ENCODE measurements at regions of chr1 and their contacts with region 1.

Region 1: GRCh38 chr1:11650331-11650991 is 3.8 kb downstream of the FBXO2 start:
- DNase-seq: peak; percentile 86 to 90
- ATAC-seq: peak; percentile 83 to 91 (median 88)
- H3K4me3 ChIP-seq: peak overlapping the region; percentile 16
- H3K4me3 Mint-ChIP-seq: peak overlapping the region; percentile 79
- H3K27ac ChIP-seq: peak overlapping the region; percentile 48
- H3K27ac Mint-ChIP-seq: peak overlapping the region; percentile 73 to 80
- H3K4me1 ChIP-seq: peaks cover 44% of the 10 kb centered on the region
- H3K4me1 Mint-ChIP-seq: peaks cover 9 to 35% of the 10 kb centered on the region in 2 donors
- H3K27me3 ChIP-seq: no peaks in the 10 kb centered on the region
- H3K27me3 Mint-ChIP-seq: no peaks in the 10 kb centered on the region
- CTCF ChIP-seq: peak; percentile 80

Region 2: GRCh38 chr1:11670747-11671146 is 20.3 kb after region 1 on chr1:
- intact Hi-C with region 1: loop called (anchors 2 kb)
- DNase-seq: no peak
- ATAC-seq: no peak
- H3K4me3 ChIP-seq: no peak overlapping the region
- H3K4me3 Mint-ChIP-seq: no peak overlapping the region
- H3K27ac ChIP-seq: no peak overlapping the region
- H3K27ac Mint-ChIP-seq: no peak overlapping the region
- H3K4me1 ChIP-seq: peaks cover 10% of the 10 kb centered on the region
- H3K4me1 Mint-ChIP-seq: peaks cover 6 to 21% of the 10 kb centered on the region in 2 donors
- H3K27me3 ChIP-seq: no peaks in the 10 kb centered on the region
- H3K27me3 Mint-ChIP-seq: no peaks in the 10 kb centered on the region
- CTCF ChIP-seq: no peak

Region 3: DNA sequence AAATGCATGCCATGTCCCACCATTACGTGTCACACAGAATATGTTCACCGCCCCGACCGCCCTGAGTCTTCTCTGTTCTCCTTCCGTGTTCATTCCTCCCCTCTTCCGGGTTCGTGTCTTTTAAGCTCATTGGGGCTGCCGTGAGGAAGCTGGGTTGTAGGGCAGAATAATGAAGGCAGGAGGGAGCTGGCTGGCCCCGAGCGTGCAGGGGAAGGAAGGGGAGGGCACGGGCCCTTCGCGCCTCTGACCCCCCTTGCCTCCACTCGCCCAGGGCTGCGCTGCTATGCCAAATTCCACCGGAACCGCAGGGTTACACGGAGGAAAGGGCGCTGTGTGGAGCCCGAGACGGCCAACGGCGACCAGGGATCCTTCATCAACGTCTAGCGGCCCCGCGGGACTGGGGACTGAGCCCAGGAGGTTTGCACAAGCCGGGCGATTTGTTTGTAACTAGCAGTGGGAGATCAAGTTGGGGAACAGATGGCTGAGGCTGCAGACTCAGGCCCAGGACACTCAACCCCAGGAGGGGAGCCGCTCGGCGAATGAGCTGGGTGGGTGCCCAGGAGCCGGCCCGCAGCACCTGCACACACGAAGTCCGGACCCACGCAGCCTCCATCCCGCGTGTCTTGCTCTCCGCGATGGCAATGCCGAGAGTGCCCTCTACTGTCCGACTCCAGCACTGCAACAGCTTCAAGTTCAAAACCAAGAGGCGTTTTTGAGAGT is 69.0 kb after region 1 on chr1:
- intact Hi-C with region 1: loop called (anchors 1 kb)
- DNase-seq: peak; percentile 89 to 95
- ATAC-seq: peak; percentile 84 to 92 (median 87)
- H3K4me3 ChIP-seq: peak overlapping the region; percentile 40
- H3K4me3 Mint-ChIP-seq: peak overlapping the region; percentile 83
- H3K27ac ChIP-seq: peak overlapping the region; percentile 75
- H3K27ac Mint-ChIP-seq: peak overlapping the region; percentile 91 to 93
- H3K4me1 ChIP-seq: peaks cover 20% of the 10 kb centered on the region
- H3K4me1 Mint-ChIP-seq: peaks cover 17 to 19% of the 10 kb centered on the region in 2 donors
- H3K27me3 ChIP-seq: no peaks in the 10 kb centered on the region
- H3K27me3 Mint-ChIP-seq: no peaks in the 10 kb centered on the region
- CTCF ChIP-seq: peak; percentile 98

Region 4: GRCh38 chr1:11805447-11806306 is 155.2 kb after region 1 on chr1 and contains the starts of genes CLCN6 and MTHFR:
- intact Hi-C with region 1: loop called (anchors 10 kb)
- DNase-seq: peak; percentile 98 to 99
- ATAC-seq: peak; percentile 77 to 93 (median 86)
- H3K4me3 ChIP-seq: peak within 1 kb of the TSS; percentile 90
- H3K4me3 Mint-ChIP-seq: peak within 1 kb of the TSS; percentile 99
- H3K27ac ChIP-seq: peak within 1 kb of the TSS; percentile 94
- H3K27ac Mint-ChIP-seq: peak within 1 kb of the TSS; percentile 95 to 97
- H3K4me1 ChIP-seq: peaks cover 48% of the 10 kb centered on the region
- H3K4me1 Mint-ChIP-seq: peaks cover 63 to 68% of the 10 kb centered on the region in 2 donors
- H3K27me3 ChIP-seq: no peaks in the 10 kb centered on the region
- H3K27me3 Mint-ChIP-seq: no peaks in the 10 kb centered on the region
- CTCF ChIP-seq: no peak
- total RNA-seq, gene CLCN6: 21.4 to 28.6 (median 25.6) TPM
- total RNA-seq, gene MTHFR: 61.8 to 78.4 (median 69.5) TPM